Spleen (tissue), 13 donors: ENCODE measurements at regions of chr2 and their contacts with region 1.

Region 1: GRCh38 chr2:241149925-241150659 is at the start of gene PPP1R7:
- DNase-seq: peak; percentile 98
- H3K4me3 ChIP-seq: peak within 1 kb of the TSS; percentile 72 to 100 (median 98)
- H3K27ac ChIP-seq: peak within 1 kb of the TSS; percentile 55 to 92 (median 86)
- H3K4me1 ChIP-seq: peaks cover 12 to 48% (median 31%) of the 10 kb centered on the region in 6 donors
- H3K27me3 ChIP-seq: no peaks in the 10 kb centered on the region
- CTCF ChIP-seq: peak in 10 of 11 experiments; percentile 15 to 73 (median 43)
- POLR2A ChIP-seq: peak in 2 of 3 donors; percentile 34
- total RNA-seq, gene PPP1R7: 36.1 to 89.3 (median 49.8) TPM

Region 2: GRCh38 chr2:240032406-240033329 is 1117.4 kb before region 1 on chr2:
- intact Hi-C with region 1: no loop called
- DNase-seq: peak; percentile 54
- H3K4me3 ChIP-seq: no peak overlapping the region
- H3K27ac ChIP-seq: no peak overlapping the region
- H3K4me1 ChIP-seq: no peaks in the 10 kb centered on the region
- H3K27me3 ChIP-seq: peaks cover 0 to 36% (median 0%) of the 10 kb centered on the region in 7 donors
- CTCF ChIP-seq: no peak
- POLR2A ChIP-seq: no peak

Region 3: GRCh38 chr2:240972636-240973521 is 177.2 kb before region 1 on chr2:
- intact Hi-C with region 1: no loop called
- DNase-seq: no peak
- H3K4me3 ChIP-seq: no peak overlapping the region
- H3K27ac ChIP-seq: no peak overlapping the region
- H3K4me1 ChIP-seq: peaks cover 0 to under 1% (median 0%) of the 10 kb centered on the region in 6 donors
- H3K27me3 ChIP-seq: peaks cover 0 to 25% (median 0%) of the 10 kb centered on the region in 7 donors
- CTCF ChIP-seq: no peak
- POLR2A ChIP-seq: no peak

Region 4: DNA sequence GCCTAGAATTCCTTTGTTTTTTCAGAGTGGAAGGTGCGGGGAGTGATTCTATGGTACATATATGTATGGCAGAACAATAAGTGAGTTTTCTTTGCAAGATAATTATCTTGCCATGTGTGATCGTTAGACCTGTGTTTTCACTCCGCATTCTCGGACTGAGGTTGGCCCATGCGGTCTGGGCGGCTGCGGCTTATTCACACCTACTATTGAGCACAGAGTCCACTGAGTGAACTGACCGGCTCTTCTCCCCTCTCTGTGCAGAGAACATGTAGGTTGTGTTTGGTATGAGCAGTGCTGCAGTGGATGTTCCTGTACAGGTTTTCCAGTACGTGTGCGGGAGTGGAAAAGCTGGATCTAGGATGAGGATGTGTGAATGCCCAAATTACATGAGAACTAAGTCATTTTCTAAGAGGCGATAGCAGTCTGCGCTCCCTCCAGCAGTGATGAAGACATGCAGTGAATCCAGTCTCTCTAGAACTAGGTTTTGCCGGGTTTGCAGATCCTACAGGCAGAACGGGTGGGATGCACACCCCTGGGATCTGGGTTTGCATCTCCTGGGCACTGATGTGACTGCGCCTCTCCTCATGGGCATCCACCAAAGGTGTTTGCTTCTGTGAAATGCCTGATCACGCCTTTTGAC is 75.1 kb before region 1 on chr2:
- intact Hi-C with region 1: loop called (anchors 5 kb)
- DNase-seq: no peak
- H3K4me3 ChIP-seq: no peak overlapping the region
- H3K27ac ChIP-seq: no peak overlapping the region
- H3K4me1 ChIP-seq: peaks cover 0 to 10% (median 5%) of the 10 kb centered on the region in 6 donors
- H3K27me3 ChIP-seq: no peaks in the 10 kb centered on the region
- CTCF ChIP-seq: no peak
- POLR2A ChIP-seq: no peak